ENCODE measurements at regions of chr1 and their contacts with region 1.

Region 1: DNA sequence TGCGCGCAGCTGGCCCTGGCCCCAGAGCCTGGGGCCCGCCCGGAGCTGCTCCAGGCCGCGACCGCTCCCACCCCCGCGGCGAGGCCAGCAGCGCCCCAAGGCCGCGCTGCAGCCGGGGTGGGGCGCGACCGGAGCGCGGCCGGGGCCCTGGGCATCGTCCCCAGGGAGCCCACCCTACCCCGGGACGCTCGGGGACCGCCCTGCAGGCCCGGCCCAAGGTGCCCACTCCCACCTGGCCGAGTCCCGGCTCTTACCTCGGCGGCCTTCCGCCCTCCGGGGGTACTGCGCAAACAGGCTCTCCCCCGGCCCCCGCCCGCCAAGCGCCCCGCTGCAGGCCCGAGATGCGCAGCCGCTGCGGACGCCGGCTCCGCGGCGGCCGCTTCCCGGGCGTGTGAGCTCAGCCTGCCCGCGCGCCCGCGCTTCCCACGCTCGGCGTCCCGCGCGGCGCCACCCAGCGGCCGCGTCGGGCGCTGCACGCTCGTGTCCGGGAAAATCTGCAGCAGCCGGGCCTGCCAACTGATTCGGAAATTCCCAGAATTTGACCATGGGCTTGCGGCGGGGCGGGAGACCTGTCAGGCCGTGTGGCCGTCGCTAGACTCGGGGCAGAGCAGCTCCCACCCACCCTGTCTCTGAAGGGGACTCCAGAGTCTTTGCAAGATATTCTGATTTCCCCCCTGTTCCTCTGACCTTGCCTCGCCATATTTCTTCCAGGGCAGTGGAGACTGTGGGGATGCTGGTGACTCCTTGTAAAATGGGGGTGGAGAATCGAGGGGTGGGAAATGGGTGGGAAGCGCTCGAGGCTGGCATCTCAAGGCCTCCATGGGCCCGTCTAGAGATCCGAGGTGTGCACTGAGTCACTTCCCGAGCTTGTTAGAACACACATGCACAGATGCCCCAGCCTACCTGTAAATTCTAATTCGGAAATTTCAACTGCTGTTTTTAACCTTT is 41.9 kb downstream of the CD34 start:
- DNase-seq: peak; percentile 64 to 86
- H3K4me3 ChIP-seq: peak overlapping the region; percentile 72
- H3K4me3 Mint-ChIP-seq: peak overlapping the region; percentile 75
- H3K27ac Mint-ChIP-seq: peak overlapping the region; percentile 82
- H3K4me1 ChIP-seq: peaks cover 49% of the 10 kb centered on the region
- H3K4me1 Mint-ChIP-seq: peaks cover 50% of the 10 kb centered on the region
- H3K27me3 ChIP-seq: no peaks in the 10 kb centered on the region
- H3K27me3 Mint-ChIP-seq: no peaks in the 10 kb centered on the region
- CTCF ChIP-seq: peak; percentile 72 to 77

Region 2: GRCh38 chr1:207672522-207673130 is 196.4 kb before region 1 on chr1:
- CTCF ChIA-PET with region 1: no interaction called
- POLR2A ChIA-PET with region 1: no interaction called
- intact Hi-C with region 1: no loop called
- DNase-seq: peak in 1 of 2 experiments; percentile 43
- H3K4me3 ChIP-seq: no peak overlapping the region
- H3K4me3 Mint-ChIP-seq: no peak overlapping the region
- H3K27ac Mint-ChIP-seq: no peak overlapping the region
- H3K4me1 ChIP-seq: no peaks in the 10 kb centered on the region
- H3K4me1 Mint-ChIP-seq: no peaks in the 10 kb centered on the region
- H3K27me3 ChIP-seq: no peaks in the 10 kb centered on the region
- H3K27me3 Mint-ChIP-seq: no peaks in the 10 kb centered on the region
- CTCF ChIP-seq: peak; percentile 43 to 62

Region 3: GRCh38 chr1:207811920-207812720 is 56.9 kb before region 1 on chr1:
- CTCF ChIA-PET with region 1: interaction called, 15 read pairs
- POLR2A ChIA-PET with region 1: no interaction called
- intact Hi-C with region 1: no loop called
- DNase-seq: peak; percentile 68 to 70
- H3K4me3 ChIP-seq: no peak overlapping the region
- H3K4me3 Mint-ChIP-seq: no peak overlapping the region
- H3K27ac Mint-ChIP-seq: peak overlapping the region; percentile 76
- H3K4me1 ChIP-seq: no peaks in the 10 kb centered on the region
- H3K4me1 Mint-ChIP-seq: peaks cover 25% of the 10 kb centered on the region
- H3K27me3 ChIP-seq: no peaks in the 10 kb centered on the region
- H3K27me3 Mint-ChIP-seq: no peaks in the 10 kb centered on the region
- CTCF ChIP-seq: peak; percentile 15 to 65

Region 4: GRCh38 chr1:207835958-207836357 is 33.1 kb before region 1 on chr1:
- CTCF ChIA-PET with region 1: no interaction called
- POLR2A ChIA-PET with region 1: no interaction called
- intact Hi-C with region 1: no loop called
- DNase-seq: peak in 1 of 2 experiments; percentile 5
- H3K4me3 ChIP-seq: no peak overlapping the region
- H3K4me3 Mint-ChIP-seq: no peak overlapping the region
- H3K27ac Mint-ChIP-seq: no peak overlapping the region
- H3K4me1 ChIP-seq: peaks cover 12% of the 10 kb centered on the region
- H3K4me1 Mint-ChIP-seq: peaks cover 14% of the 10 kb centered on the region
- H3K27me3 ChIP-seq: no peaks in the 10 kb centered on the region
- H3K27me3 Mint-ChIP-seq: no peaks in the 10 kb centered on the region
- CTCF ChIP-seq: no peak

Measured in Caco-2 (cell line).